ENCODE measurements at regions of chr1 and their contacts with region 1.

Region 1: DNA sequence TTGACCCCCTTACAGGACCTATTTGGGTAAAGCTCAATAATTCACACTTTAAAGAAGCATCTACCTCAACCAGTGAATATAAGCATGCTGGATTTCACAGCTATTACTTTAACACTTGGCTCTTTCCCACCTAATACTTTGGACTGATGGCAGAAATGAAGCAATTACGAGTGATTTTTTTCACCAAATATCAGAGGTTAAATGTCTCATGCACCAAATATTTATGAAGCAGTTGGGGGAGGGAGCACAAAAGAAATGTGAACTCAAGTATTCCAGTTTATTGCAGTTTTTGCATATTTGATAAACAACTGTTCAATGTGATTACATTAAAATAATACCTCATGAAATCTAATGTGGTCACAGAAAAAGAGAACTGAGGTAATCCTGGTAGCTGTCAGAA is 223.6 kb downstream of the LRRC7 start:
- DNase-seq: no peak
- H3K4me3 ChIP-seq: no peak overlapping the region
- H3K4me3 Mint-ChIP-seq: no peak overlapping the region
- H3K27ac Mint-ChIP-seq: no peak overlapping the region
- H3K4me1 ChIP-seq: no peaks in the 10 kb centered on the region
- H3K4me1 Mint-ChIP-seq: peaks cover 7% of the 10 kb centered on the region
- H3K27me3 ChIP-seq: no peaks in the 10 kb centered on the region
- H3K27me3 Mint-ChIP-seq: no peaks in the 10 kb centered on the region
- CTCF ChIP-seq: no peak

Region 2: GRCh38 chr1:69814926-69815325 is 23.6 kb after region 1 on chr1:
- CTCF ChIA-PET with region 1: no interaction called
- POLR2A ChIA-PET with region 1: interaction called, 11 read pairs
- intact Hi-C with region 1: no loop called
- DNase-seq: no peak
- H3K4me3 ChIP-seq: no peak overlapping the region
- H3K4me3 Mint-ChIP-seq: no peak overlapping the region
- H3K27ac Mint-ChIP-seq: no peak overlapping the region
- H3K4me1 ChIP-seq: no peaks in the 10 kb centered on the region
- H3K4me1 Mint-ChIP-seq: no peaks in the 10 kb centered on the region
- H3K27me3 ChIP-seq: no peaks in the 10 kb centered on the region
- H3K27me3 Mint-ChIP-seq: no peaks in the 10 kb centered on the region
- CTCF ChIP-seq: no peak

Measured in Caco-2 (cell line).